PC-9 (cell line): ENCODE measurements at regions of chr20 and their contacts with region 1.

Region 1: DNA sequence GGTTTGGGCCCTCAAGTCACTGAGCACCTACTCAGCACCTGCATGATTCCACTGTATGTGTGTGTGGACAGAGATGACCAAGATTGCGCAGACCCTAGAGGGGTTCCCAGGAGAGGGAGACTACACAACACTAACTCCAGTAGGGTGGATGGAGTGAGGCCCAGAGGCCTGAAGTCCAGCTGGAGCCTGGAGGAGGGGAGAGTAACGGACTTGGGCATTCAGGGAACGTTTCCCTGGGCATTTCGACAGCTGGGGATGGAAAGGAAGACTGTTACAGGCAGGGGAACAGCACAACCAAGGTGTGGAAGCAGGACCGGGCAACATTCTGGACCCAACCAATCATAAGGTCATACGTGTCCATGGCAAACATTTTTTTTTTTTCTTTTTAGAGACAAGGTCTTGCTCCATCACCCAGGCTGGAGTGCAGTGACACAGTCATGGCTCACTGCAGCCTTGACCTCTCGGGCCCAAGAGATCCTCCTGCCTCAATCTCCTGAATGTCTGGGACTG is 11.1 kb upstream of the CEBPB start:
- DNase-seq: no peak
- H3K4me3 ChIP-seq: no peak overlapping the region
- H3K27ac ChIP-seq: no peak overlapping the region
- H3K4me1 ChIP-seq: no peaks in the 10 kb centered on the region
- H3K27me3 ChIP-seq: no peaks in the 10 kb centered on the region
- CTCF ChIP-seq: peak; percentile 42

Region 2: GRCh38 chr20:49982346-49983122 is 197.0 kb before region 1 on chr20 and contains the start of gene SNAI1:
- CTCF ChIA-PET with region 1: interaction called, 4 read pairs
- POLR2A ChIA-PET with region 1: no interaction called
- intact Hi-C with region 1: loop called (anchors 2 kb)
- DNase-seq: peak; percentile 82 to 88
- H3K4me3 ChIP-seq: peak within 1 kb of the TSS; percentile 75
- H3K27ac ChIP-seq: no peak within 1 kb of the TSS
- H3K4me1 ChIP-seq: peaks cover 10% of the 10 kb centered on the region
- H3K27me3 ChIP-seq: no peaks in the 10 kb centered on the region
- CTCF ChIP-seq: peak; percentile 68
- total RNA-seq, gene SNAI1: 2.2 and 3.6 TPM in 2 replicates

Region 3: DNA sequence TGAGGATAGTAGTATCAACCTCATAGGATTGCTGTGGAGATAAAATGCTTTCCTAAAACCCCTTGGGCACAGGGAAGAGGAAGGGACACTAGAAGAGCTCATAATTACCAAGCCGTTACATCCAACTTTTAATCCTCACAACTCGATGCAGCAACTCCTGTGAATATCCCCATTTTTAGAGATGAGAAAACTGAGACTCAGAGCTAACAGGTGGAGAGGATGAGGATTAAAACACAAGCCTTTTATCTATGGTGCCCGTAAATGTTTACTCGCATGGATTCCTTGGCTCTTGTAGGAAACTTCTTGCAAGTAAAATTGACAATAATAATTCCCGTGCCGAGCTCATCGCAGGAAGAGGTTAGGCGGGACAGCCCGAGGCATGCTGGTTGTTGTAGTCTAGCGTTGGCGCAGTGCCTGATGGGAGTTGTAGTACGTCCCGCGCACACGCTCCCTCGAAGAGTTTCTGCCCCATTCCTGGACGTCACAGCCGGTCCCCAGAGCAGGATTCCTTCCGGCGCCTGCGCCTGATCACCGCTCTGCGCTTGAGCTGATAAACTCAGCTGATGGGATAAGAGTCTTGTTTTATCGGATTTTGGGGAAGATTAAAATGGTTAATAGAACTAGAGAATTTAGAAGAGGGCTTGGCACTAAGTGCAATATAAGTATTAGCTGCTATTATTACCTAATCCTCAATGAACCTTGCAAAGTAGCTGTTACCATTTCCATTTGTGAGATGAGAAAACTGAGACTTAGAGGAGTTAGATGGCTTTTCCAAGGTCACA is 63.8 kb before region 1 on chr20:
- CTCF ChIA-PET with region 1: interaction called, 14 read pairs
- POLR2A ChIA-PET with region 1: no interaction called
- intact Hi-C with region 1: no loop called
- DNase-seq: peak; percentile 90 to 95
- H3K4me3 ChIP-seq: peak overlapping the region; percentile 73
- H3K27ac ChIP-seq: peak overlapping the region; percentile 20; the same call in 1 of the 2 replicates
- H3K4me1 ChIP-seq: peaks cover 27% of the 10 kb centered on the region
- H3K27me3 ChIP-seq: no peaks in the 10 kb centered on the region
- CTCF ChIP-seq: no peak

Region 4: GRCh38 chr20:50120897-50121693 is 58.5 kb before region 1 on chr20:
- CTCF ChIA-PET with region 1: interaction called, 14 read pairs
- POLR2A ChIA-PET with region 1: no interaction called
- intact Hi-C with region 1: loop called (anchors 1 kb)
- DNase-seq: peak; percentile 66 to 72
- H3K4me3 ChIP-seq: no peak overlapping the region
- H3K27ac ChIP-seq: no peak overlapping the region
- H3K4me1 ChIP-seq: peaks cover 11% of the 10 kb centered on the region
- H3K27me3 ChIP-seq: no peaks in the 10 kb centered on the region
- CTCF ChIP-seq: peak; percentile 90

Region 5: GRCh38 chr20:50191282-50192125 is 11.9 kb after region 1 on chr20:
- CTCF ChIA-PET with region 1: no interaction called
- POLR2A ChIA-PET with region 1: no interaction called
- intact Hi-C with region 1: no loop called
- DNase-seq: peak; percentile 50 to 72
- H3K4me3 ChIP-seq: peak overlapping the region; percentile 88
- H3K27ac ChIP-seq: peak overlapping the region; percentile 99
- H3K4me1 ChIP-seq: peaks cover 59% of the 10 kb centered on the region
- H3K27me3 ChIP-seq: no peaks in the 10 kb centered on the region
- CTCF ChIP-seq: no peak

Region 6: DNA sequence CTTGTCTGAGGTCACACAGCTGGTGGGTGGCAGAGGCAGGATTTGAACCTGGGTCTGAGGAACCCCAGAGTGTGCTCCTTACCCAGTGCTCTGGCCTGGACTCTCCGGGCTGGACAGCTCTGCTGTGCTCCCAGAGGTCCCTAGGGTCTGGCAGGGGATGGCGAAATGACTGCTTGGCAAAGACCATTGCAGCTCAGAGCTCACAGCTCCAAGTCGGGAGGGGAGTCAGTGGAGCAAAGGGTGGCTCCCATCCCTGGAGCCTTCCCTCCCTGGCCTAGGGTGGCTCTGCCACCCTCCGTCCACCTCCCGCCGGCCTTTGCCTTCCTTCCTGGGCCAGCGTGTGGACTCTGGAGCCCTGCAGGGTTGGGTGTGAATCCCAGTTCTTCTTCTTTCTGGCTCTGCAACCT is 28.5 kb after region 1 on chr20:
- CTCF ChIA-PET with region 1: no interaction called
- POLR2A ChIA-PET with region 1: no interaction called
- intact Hi-C with region 1: no loop called
- DNase-seq: no peak
- H3K4me3 ChIP-seq: no peak overlapping the region
- H3K27ac ChIP-seq: no peak overlapping the region
- H3K4me1 ChIP-seq: peaks cover 15% of the 10 kb centered on the region
- H3K27me3 ChIP-seq: no peaks in the 10 kb centered on the region
- CTCF ChIP-seq: no peak

Region 7: DNA sequence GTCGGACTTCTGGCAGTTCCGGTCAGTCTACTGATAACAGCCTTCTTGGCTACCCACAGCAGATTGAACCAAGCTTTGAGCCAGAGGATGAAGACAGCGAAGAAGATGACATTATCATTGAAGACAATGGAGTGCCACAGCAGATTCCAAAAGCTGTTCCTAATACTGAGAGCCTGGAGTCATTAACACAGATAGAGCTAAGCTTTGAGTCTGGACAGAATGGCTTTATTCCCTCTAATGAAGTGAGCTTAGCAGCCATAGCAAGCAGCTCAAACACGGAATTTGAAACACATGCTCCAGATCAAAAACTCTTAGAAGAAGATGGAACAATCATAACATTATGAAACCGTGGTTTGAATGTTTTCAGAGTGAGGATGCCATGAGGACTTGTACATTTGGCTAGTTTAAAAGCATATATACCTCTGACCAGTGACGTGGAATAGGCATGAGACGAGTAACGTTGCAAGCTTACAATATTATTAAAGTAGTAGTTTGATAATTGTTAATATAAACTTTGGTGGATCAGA is 570.6 kb after region 1 on chr20:
- CTCF ChIA-PET with region 1: no interaction called
- POLR2A ChIA-PET with region 1: interaction called, 26 read pairs
- intact Hi-C with region 1: no loop called
- DNase-seq: no peak
- H3K4me3 ChIP-seq: no peak overlapping the region
- H3K27ac ChIP-seq: no peak overlapping the region
- H3K4me1 ChIP-seq: peaks cover 36% of the 10 kb centered on the region
- H3K27me3 ChIP-seq: no peaks in the 10 kb centered on the region
- CTCF ChIP-seq: no peak